ENCODE measurements at regions of chr6 and their contacts with region 1.

Region 1: DNA sequence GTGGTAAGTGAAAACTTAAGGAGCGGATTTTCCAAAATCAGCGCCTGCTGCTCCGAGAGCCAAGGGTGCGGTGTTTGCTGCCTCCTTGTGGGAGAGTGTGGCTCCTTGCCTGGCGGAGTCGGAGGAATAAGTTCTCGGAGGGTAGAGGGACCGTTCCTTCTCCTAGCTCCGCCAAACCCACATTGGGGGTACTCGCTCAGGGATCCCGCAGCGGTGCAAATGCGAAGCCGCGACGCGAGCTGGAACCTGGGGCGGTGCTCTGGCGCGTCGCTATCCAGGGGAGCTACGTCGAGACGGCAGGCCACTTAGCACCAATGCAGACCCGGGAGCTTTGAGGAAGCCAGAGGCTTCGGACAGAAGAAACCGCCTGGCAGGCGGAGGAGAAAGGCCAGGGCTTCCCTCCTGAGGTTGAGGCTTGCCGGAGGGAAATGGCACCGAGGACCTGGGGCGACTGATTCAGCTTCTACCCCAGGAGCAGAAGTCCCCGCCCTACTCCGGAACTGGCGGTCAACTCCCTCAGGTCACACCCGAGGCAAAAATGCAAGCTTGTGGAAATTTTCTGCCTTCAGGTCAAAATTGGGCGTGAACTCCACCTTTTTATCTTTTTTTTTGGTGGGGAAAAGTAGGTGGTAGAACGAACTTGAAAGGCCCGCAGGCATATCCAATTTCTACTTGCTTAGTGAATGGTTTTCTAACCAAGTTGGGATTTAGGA is 5.7 kb upstream of the DDX43 start:
- DNase-seq: peak; percentile 63
- H3K4me3 ChIP-seq: peak overlapping the region; percentile 32 to 58 (median 47)
- H3K27ac ChIP-seq: no peak overlapping the region
- H3K4me1 ChIP-seq: peaks cover 2% of the 10 kb centered on the region
- H3K27me3 ChIP-seq: no peaks in the 10 kb centered on the region
- CTCF ChIP-seq: peak; percentile 54 to 81

Region 2: DNA sequence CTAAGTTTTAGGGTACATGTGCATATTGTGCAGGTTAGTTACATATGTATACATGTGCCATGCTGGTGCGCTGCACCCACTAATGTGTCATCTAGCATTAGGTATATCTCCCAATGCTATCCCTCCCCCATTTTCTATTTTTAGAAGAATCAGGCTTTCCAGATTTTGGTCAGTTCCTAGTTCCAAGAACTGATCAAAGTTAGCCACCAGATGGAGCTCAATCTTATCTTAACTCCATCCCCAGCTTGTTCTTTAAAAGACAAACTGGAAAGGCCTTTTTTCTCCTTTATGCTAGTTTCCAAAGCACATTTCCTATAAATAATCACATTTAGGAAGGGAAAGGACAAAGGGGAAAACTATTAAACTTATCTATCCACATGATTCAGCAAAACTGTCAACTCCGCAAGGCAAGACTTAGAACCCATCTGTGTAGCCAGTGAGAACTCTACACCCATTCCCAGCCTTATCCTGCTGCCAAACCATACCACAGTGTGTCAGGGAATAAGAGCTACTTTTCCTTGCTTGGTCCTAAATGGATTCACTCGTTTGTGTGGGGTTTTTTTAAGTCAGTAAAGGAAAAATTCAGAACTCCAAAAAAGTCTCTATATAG is 103.2 kb before region 1 on chr6:
- CTCF ChIA-PET with region 1: no interaction called
- dilution Hi-C with region 1: no loop called
- in situ Hi-C with region 1: no loop called
- intact Hi-C with region 1: loop called (anchors 1 kb)
- DNase-seq: peak; percentile 30
- H3K4me3 ChIP-seq: no peak overlapping the region
- H3K27ac ChIP-seq: no peak overlapping the region
- H3K4me1 ChIP-seq: no peaks in the 10 kb centered on the region
- H3K27me3 ChIP-seq: no peaks in the 10 kb centered on the region
- CTCF ChIP-seq: peak; percentile 29 to 47

Region 3: GRCh38 chr6:73610444-73611275 is 221.7 kb after region 1 on chr6:
- CTCF ChIA-PET with region 1: no interaction called
- dilution Hi-C with region 1: no loop called
- in situ Hi-C with region 1: no loop called
- intact Hi-C with region 1: loop called (anchors 10 kb)
- DNase-seq: peak; percentile 33
- H3K4me3 ChIP-seq: no peak overlapping the region
- H3K27ac ChIP-seq: no peak overlapping the region
- H3K4me1 ChIP-seq: no peaks in the 10 kb centered on the region
- H3K27me3 ChIP-seq: no peaks in the 10 kb centered on the region
- CTCF ChIP-seq: peak; percentile 61

Measured in mammary epithelial cell (primary cell).